Left cardiac atrium (tissue), 4 donors: ENCODE measurements at regions of chr17 and their contacts with region 1.

Region 1: GRCh38 chr17:21119247-21119918 is 7.4 kb upstream of the DHRS7B start:
- DNase-seq: peak; percentile 69
- ATAC-seq: peak; percentile 57 to 76

Region 2: GRCh38 chr17:21072745-21073197 is 46.6 kb before region 1 on chr17:
- intact Hi-C with region 1: no loop called
- DNase-seq: no peak
- ATAC-seq: no peak

Region 3: DNA sequence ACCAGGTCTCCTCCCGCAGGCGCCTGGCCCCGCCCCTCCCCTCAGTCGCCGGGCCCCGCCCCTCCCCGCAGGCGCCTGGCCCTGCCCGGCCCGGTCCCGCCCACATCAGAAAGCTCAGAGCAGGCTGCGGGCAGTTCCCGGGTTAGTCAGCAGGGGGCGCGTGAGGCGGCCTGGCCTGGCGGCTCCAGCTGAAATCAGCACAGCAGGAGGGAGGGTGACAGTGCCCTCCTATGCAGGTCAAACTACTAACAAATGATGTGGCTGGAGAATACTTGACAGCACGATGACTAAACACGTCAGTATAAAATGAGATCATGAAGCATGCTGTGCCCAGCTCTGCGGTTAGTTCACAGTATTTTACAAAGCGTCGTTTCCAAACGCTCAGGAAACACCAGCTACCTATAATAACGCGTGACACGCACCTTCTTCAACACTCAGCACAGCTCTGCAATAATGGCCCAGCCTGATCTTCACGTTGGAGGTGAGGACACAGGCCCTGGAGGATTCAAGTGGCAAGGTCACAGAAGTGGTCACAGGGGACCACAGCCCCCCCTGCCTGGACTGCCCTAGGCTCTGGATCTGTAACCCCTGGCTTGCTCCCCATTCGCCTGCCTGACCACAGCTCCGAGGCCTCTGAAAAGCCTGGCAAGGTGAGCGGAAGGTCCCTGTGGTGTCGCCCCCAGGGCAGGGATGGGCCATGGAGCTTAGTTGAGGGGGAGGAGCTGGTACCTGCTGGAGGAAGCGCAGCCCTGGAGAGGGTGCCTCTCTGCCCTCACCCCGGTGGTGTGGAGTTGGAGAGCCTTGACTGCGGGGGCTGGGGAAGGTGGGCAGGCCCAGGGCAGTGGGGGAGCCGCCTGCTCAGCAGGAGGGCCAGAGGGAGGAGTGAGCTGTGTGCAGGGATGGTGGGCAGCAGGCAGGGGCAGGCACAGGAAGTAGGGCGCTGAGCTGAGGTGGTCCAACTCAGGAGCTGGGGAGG is 338.0 kb after region 1 on chr17:
- intact Hi-C with region 1: loop called in 1 of 2 experiments (anchors 10 kb)
- DNase-seq: peak; percentile 90
- ATAC-seq: peak; percentile 92 to 94